Aorta (tissue), 5 donors: ENCODE measurements at regions of chr10 and their contacts with region 1.

Region 1: DNA sequence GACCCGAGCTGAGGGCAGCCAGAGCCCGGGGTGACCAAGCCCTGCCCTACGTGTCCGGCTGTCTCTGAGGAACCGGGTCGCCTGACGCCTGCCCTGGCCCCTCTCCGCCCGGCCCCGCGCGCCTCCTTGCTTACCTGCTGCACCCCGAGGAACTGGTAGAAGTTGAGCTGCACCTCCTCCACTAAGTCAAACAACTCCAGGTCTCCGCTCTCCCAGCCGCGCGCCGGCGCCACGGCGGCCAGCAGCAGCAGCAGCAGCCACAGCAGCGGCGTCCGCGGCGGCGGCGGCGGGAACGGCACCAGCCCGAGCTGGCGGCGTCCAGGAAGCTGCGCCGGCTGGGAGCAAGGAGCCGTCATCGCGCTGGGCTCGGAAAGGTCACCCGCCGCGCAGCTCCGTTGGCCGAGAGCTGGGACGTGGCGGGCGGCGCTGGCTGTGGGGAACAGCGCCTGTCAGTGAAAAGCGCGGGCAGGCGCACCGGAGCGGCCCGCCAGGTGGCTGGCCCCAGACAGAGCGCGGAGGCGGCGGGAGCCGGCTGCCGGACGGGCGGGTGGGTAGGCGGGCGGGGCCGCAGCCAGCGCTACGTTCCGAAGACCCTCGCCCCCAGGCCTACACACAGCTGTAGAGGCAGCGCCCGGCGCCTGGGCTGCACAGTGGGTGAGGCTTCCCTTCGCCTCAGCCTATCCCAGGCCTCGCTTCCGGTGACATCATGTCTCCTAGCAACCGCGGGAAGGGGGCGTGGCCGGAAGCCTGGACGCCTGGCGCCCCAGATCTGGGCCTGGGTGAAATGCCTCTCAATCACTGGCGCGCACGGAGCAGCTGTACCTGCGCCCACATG is at the start of gene DNAJC1:
- DNase-seq: peak; percentile 98 to 99
- ATAC-seq: peak; percentile 99
- H3K4me3 ChIP-seq: peak within 1 kb of the TSS; percentile 58 to 79
- H3K27ac ChIP-seq: peak within 1 kb of the TSS; percentile 74 to 76
- H3K4me1 ChIP-seq: no peaks in the 10 kb centered on the region
- H3K27me3 ChIP-seq: no peaks in the 10 kb centered on the region
- total RNA-seq, gene DNAJC1: 26.7 to 30.4 TPM

Region 2: GRCh38 chr10:21495752-21496342 is 507.4 kb before region 1 on chr10:
- intact Hi-C with region 1: loop called (anchors 10 kb)
- DNase-seq: peak; percentile 86 to 96
- ATAC-seq: peak; percentile 94
- H3K4me3 ChIP-seq: peak overlapping the region; percentile 72 to 90
- H3K27ac ChIP-seq: no peak overlapping the region
- H3K4me1 ChIP-seq: no peaks in the 10 kb centered on the region
- H3K27me3 ChIP-seq: no peaks in the 10 kb centered on the region

Region 3: DNA sequence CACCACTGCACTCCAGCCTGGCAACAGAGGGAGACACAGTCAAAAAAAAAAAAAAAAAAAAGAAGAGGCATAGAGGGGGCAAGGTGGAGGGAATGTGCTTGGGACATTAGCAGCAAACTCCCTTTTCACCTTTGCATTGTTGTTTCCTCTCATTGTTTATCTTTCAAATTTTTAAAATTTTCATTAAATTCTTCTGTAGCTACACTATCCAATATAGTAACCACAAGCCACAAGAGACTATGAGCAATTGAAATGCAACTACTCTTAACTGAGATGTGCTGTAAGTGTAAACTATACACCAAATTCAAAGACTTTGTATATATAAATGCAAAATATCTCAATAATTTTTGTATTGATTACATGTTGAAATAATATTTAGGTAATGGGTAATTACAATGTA is 171.1 kb after region 1 on chr10:
- intact Hi-C with region 1: no loop called
- DNase-seq: no peak
- ATAC-seq: no peak
- H3K4me3 ChIP-seq: no peak overlapping the region
- H3K27ac ChIP-seq: no peak overlapping the region
- H3K4me1 ChIP-seq: no peaks in the 10 kb centered on the region
- H3K27me3 ChIP-seq: no peaks in the 10 kb centered on the region

Region 4: DNA sequence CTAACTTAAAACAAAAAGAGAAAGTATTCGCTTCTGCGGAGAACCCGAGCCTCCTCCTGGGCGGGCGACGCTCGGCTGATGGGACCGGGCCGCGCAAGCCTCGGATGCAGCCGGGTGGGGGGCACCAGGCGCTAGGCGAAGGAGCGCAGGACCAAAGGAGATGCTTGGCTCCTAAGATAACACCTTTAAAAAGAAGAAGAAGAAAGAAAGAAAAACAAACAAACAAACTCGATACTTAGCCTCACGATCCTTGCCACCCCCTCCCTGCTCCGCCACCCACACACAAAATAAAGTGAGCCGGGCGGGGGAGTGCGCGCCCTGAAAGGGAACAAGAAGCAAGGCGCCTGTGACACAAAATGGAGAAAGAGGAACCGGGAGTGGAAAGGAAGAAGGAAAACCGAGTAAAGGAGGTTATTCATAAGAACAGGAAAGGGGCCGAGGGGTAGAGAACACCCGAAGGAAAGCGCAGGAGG is 248.5 kb after region 1 on chr10:
- intact Hi-C with region 1: loop called in 1 of 2 experiments (anchors 2 kb)
- DNase-seq: peak; percentile 81 to 83
- ATAC-seq: peak; percentile 78
- H3K4me3 ChIP-seq: peak overlapping the region; percentile 65 to 80
- H3K27ac ChIP-seq: peak overlapping the region; percentile 92 to 93
- H3K4me1 ChIP-seq: no peaks in the 10 kb centered on the region
- H3K27me3 ChIP-seq: no peaks in the 10 kb centered on the region

Region 5: GRCh38 chr10:22268503-22268902 is 265.2 kb after region 1 on chr10:
- intact Hi-C with region 1: no loop called
- DNase-seq: no peak
- ATAC-seq: no peak
- H3K4me3 ChIP-seq: no peak overlapping the region
- H3K27ac ChIP-seq: no peak overlapping the region
- H3K4me1 ChIP-seq: no peaks in the 10 kb centered on the region
- H3K27me3 ChIP-seq: no peaks in the 10 kb centered on the region

Region 6: GRCh38 chr10:22325272-22326144 is 322.2 kb after region 1 on chr10:
- intact Hi-C with region 1: loop called in 1 of 2 experiments (anchors 10 kb)
- DNase-seq: peak; percentile 83 to 92
- ATAC-seq: peak; percentile 72
- H3K4me3 ChIP-seq: peak overlapping the region; percentile 44 to 92
- H3K27ac ChIP-seq: peak overlapping the region in 1 of 2 donors; percentile 52
- H3K4me1 ChIP-seq: peaks cover 2 to 3% of the 10 kb centered on the region in 2 donors
- H3K27me3 ChIP-seq: no peaks in the 10 kb centered on the region

Region 7: GRCh38 chr10:22550732-22551131 is 547.4 kb after region 1 on chr10:
- intact Hi-C with region 1: loop called in 1 of 2 experiments (anchors 10 kb)
- DNase-seq: peak in 1 of 2 donors; percentile 82
- ATAC-seq: no peak
- H3K4me3 ChIP-seq: no peak overlapping the region
- H3K27ac ChIP-seq: no peak overlapping the region
- H3K4me1 ChIP-seq: peaks cover 2 to 3% of the 10 kb centered on the region in 2 donors
- H3K27me3 ChIP-seq: no peaks in the 10 kb centered on the region

Region 8: DNA sequence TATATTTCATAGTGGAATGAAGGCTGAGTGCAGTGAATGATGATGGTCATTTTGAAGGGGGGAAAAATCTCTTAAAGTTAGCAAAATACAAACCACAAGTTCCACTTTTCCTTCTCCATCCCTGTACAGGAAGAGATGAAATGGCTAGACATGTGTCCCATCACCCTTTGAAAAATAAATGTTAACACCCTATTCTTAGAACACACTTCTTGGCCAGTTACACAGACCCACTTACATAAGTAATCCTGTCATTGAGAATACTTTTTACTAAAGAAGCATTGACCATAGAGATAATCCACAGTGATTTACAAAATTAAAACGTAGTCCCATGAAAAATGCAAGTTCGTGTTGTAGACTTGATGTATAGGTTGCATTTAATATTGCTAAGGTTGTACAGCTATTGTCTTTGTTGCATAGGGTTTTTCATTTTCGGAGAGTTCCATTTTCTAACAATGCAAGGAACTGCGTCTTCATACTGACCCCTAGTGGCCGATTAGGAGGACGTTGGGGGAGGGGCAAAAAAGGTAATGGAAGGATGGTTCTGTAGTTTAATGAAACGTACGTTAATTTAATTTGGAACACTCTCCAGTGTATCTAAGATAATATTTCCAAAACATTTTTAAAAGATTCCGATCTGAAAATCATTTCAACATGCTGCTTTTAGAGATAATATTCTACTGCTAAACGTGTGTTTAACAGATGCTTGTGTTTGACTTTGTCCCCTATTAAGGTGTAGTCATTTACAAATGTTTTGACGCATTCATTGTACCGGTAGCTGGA is 985.5 kb after region 1 on chr10:
- intact Hi-C with region 1: loop called in 1 of 2 experiments (anchors 5 kb)
- DNase-seq: peak in 1 of 2 donors; percentile 46
- ATAC-seq: peak; percentile 88
- H3K4me3 ChIP-seq: no peak overlapping the region
- H3K27ac ChIP-seq: no peak overlapping the region
- H3K4me1 ChIP-seq: no peaks in the 10 kb centered on the region
- H3K27me3 ChIP-seq: peaks cover 0 to 1% of the 10 kb centered on the region in 2 donors

Region 9: DNA sequence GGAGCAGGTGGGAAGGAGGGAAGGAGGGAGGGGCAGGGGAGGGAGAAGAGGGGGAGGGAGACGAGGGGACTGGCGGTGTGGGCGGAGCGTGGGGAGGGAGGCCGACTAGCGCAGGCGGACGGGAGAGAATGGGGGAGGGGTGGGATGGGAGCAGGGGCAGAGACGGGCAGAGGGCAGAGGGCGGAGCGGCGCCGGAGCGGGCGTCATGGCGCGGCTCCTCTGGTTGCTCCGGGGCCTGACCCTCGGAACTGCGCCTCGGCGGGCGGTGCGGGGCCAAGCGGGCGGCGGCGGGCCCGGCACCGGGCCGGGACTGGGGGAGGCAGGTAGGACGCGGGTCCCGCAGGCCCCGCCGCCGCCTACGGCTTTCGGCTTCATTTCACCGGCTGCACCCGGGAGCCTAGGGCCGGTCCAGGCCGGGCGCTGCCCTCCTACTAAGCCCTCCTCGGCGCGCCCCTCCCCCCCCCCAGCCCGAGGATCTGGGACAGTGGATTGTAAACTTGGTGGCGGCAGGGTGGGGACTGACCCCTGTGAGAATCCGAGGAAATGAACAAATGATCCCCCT is 1092.2 kb after region 1 on chr10 and contains the start of gene MSRB2:
- intact Hi-C with region 1: loop called in 1 of 2 experiments (anchors 1 kb)
- DNase-seq: peak; percentile 96 to 97
- ATAC-seq: peak; percentile 94
- H3K4me3 ChIP-seq: peak within 1 kb of the TSS; percentile 62 to 85
- H3K27ac ChIP-seq: peak within 1 kb of the TSS; percentile 68 to 89
- H3K4me1 ChIP-seq: no peaks in the 10 kb centered on the region
- H3K27me3 ChIP-seq: no peaks in the 10 kb centered on the region
- total RNA-seq, gene MSRB2: 30.4 to 34.5 TPM